Sigmoid colon (tissue), 7 donors: ENCODE measurements at regions of chr10 and their contacts with region 1.

Region 1: DNA sequence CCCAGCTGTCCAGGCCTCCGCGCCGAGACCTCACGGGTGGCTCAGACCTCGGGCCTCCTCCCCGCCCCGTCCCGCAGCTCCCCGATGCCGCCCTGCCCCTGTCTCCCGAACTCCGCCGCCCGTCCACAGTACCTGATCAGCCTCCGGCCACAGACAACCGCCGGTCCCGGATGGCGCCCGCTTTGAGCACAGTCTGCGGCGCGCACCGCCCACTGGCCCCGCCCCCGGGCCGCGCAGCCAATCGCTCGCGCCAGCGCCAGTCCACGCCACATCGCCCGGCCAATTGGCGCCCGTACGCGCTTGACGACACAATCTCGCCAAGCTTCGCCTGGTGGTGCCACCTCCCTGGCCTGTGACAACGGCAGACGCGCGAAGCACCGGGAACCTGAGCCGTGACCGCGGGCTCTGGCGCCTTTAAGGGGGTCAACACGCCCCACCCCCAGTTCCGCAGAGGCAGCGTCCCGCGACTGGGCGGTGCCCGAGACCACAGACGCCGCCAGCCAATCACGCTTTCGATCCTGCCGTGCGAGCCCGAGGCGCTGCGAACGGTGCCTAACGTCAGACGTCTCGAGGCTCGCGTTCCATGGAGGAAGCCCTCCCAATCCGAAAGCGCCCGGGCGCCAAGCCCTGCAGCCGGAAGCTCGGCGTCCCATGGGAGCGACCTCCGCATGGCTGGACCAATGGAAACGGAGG is at the start of gene IDI1:
- DNase-seq: peak; percentile 99
- H3K4me3 ChIP-seq: peak within 1 kb of the TSS; percentile 71 to 87 (median 74)
- H3K27ac ChIP-seq: peak within 1 kb of the TSS; percentile 98 to 100 (median 100)
- H3K4me1 ChIP-seq: peaks cover 0 to 43% (median 26%) of the 10 kb centered on the region in 4 donors
- H3K27me3 ChIP-seq: no peaks in the 10 kb centered on the region
- CTCF ChIP-seq: no peak
- EP300 ChIP-seq: peak in 1 of 4 donors; percentile 68
- POLR2A ChIP-seq: peak; percentile 85 to 89
- total RNA-seq, gene IDI1: 22.4 to 35.8 (median 32.1) TPM

Region 2: DNA sequence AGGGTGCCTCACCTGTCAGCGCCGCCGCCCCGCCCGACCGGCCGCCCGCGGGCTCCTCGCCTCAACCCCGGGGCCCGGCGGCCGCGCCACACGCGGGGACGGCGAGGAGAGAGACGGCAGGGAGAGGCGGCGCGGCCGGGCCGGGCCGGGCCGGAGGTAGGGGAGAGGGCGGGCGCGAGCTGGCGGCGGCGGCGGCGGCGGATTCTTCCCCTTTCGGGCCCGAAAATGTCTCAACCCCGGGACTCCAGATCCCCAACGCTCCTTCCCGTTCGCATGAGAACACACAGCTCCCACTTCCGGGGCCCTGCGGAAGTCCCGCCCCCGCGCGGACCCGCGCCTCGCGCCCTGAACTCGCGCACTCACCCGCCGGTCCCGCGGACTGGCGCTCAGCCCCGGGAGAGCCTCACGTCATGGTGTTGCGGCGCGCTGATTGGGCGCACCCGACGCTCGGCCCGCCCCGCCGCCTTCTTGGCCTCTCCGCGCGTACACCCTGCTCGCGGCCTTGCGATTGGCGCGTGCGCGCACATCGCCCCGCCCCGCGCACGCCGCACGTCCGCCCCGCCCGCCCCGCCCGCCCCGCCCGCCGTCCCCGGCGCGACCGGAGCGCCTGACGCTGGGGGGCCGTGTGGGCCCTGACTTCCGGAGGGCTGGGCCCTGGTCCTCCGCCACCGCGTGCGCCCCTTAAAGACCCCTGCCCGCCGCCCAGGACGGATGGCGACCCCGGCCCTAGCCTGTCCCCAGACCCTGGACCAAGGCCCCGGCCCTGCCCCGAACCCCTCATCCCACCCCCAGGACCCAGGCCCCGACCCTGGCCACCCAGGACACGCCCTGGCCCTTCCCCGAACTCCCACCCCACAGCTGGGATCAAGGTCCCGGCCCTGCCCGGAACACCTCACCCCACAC is 117.2 kb before region 1 on chr10 and contains the start of gene LARP4B:
- intact Hi-C with region 1: loop called (anchors 2 kb)
- DNase-seq: peak; percentile 98
- H3K4me3 ChIP-seq: peak within 1 kb of the TSS; percentile 88 to 94 (median 90)
- H3K27ac ChIP-seq: peak within 1 kb of the TSS; percentile 96 to 99 (median 98)
- H3K4me1 ChIP-seq: peaks cover 0 to 44% (median 36%) of the 10 kb centered on the region in 4 donors
- H3K27me3 ChIP-seq: no peaks in the 10 kb centered on the region
- CTCF ChIP-seq: no peak
- EP300 ChIP-seq: peak in 1 of 4 donors; percentile 5
- POLR2A ChIP-seq: peak; percentile 17 to 19
- total RNA-seq, gene LARP4B: 31.7 to 57.6 (median 40.8) TPM

Region 3: GRCh38 chr10:987870-988666 is 60.8 kb before region 1 on chr10 and contains the start of gene GTPBP4:
- intact Hi-C with region 1: loop called (anchors 5 kb)
- DNase-seq: peak; percentile 99
- H3K4me3 ChIP-seq: peak within 1 kb of the TSS; percentile 76 to 97 (median 96)
- H3K27ac ChIP-seq: peak within 1 kb of the TSS; percentile 93 to 97 (median 94)
- H3K4me1 ChIP-seq: peaks cover 0 to 27% (median 23%) of the 10 kb centered on the region in 4 donors
- H3K27me3 ChIP-seq: no peaks in the 10 kb centered on the region
- CTCF ChIP-seq: no peak
- EP300 ChIP-seq: no peak
- POLR2A ChIP-seq: peak; percentile 60 to 67
- total RNA-seq, gene GTPBP4: 12.0 to 22.8 (median 19.6) TPM